Mucosa of descending colon (tissue), 3 donors: ENCODE measurements at regions of chr16 and their contacts with region 1.

Region 1: DNA sequence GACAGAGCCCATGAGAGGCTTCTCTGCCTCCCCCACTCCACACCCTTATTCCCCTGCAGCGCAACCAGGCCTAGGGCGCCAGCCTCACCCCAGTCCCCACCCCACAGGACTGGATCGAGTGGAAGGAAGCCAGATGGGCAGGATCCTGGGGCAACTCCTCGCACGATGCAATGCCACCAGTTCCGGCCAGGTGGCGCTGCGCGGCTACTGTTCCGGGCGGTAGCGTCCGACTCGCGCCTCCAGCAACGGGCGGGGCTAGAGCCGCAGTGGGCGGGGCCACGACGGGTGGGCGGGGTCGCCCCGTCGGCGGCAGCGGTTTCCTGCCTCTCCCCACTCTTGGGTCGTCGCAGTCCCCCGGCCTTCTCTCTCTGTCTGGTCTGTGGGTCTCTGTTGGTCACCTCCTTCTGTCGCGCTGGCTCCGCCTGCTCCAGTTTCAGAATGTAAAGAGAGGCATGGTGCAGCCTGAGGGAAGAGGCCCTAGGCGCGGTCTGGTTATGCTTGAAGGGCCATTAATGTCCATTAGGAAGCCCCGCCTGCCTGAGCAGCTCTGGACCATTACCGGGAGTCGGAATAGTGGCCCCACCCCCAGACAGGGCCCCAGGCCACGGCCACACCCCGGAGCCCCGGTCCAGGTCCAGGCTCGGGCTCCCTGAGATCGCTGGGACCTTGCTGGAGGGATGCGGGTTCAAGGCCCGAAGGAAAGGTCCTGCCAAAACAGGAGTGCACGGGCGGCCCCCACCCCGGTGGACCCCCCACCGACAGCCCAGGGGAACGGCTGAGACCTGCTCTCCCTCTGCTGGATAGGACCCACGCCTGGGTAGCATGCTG is 3.4 kb upstream of the NHERF2 start:
- DNase-seq: peak; percentile 95 to 99 (median 97)
- ATAC-seq: peak; percentile 95
- H3K4me3 ChIP-seq: peak overlapping the region; percentile 9
- H3K4me1 ChIP-seq: peaks cover 35% of the 10 kb centered on the region
- CTCF ChIP-seq: peak; percentile 95

Region 2: GRCh38 chr16:2147981-2148671 is 124.8 kb after region 1 on chr16 and contains the start of gene RAB26:
- intact Hi-C with region 1: loop called (anchors 10 kb)
- DNase-seq: peak; percentile 87 to 94 (median 93)
- ATAC-seq: peak; percentile 84
- H3K4me3 ChIP-seq: no peak within 1 kb of the TSS
- H3K4me1 ChIP-seq: peaks cover 42% of the 10 kb centered on the region
- CTCF ChIP-seq: no peak
- total RNA-seq, gene RAB26: 3.8 to 28.3 (median 15.7) TPM

Region 3: GRCh38 chr16:2155091-2156021 is 132.0 kb after region 1 on chr16 and contains the start of gene TRAF7:
- intact Hi-C with region 1: loop called in 1 of 2 experiments (anchors 10 kb)
- DNase-seq: peak; percentile 98 to 99 (median 98)
- ATAC-seq: peak; percentile 77
- H3K4me3 ChIP-seq: peak within 1 kb of the TSS; percentile 42
- H3K4me1 ChIP-seq: peaks cover 77% of the 10 kb centered on the region
- CTCF ChIP-seq: peak; percentile 12
- total RNA-seq, gene TRAF7: 91.5 to 104 (median 94.0) TPM